Motor neuron (in vitro differentiated cells): ENCODE measurements at regions of chr9 and their contacts with region 1.

Region 1: GRCh38 chr9:25827626-25828025 is 149.4 kb upstream of the TUSC1 start:
- ATAC-seq: no peak
- H3K4me3 ChIP-seq: no peak overlapping the region
- H3K27ac ChIP-seq: no peak overlapping the region
- H3K4me1 ChIP-seq: no peaks in the 10 kb centered on the region

Region 2: GRCh38 chr9:25742256-25742655 is 85.4 kb before region 1 on chr9:
- in situ Hi-C with region 1: loop called in 1 of 9 experiments (anchors 25 kb)
- ATAC-seq: peak in 5 of 8 experiments; percentile 97 to 99 (median 98)
- H3K4me3 ChIP-seq: no peak overlapping the region
- H3K27ac ChIP-seq: no peak overlapping the region
- H3K4me1 ChIP-seq: peaks cover 13 to 23% of the 10 kb centered on the region in 2 donors